ENCODE measurements at regions of chr5 and their contacts with region 1.

Region 1: DNA sequence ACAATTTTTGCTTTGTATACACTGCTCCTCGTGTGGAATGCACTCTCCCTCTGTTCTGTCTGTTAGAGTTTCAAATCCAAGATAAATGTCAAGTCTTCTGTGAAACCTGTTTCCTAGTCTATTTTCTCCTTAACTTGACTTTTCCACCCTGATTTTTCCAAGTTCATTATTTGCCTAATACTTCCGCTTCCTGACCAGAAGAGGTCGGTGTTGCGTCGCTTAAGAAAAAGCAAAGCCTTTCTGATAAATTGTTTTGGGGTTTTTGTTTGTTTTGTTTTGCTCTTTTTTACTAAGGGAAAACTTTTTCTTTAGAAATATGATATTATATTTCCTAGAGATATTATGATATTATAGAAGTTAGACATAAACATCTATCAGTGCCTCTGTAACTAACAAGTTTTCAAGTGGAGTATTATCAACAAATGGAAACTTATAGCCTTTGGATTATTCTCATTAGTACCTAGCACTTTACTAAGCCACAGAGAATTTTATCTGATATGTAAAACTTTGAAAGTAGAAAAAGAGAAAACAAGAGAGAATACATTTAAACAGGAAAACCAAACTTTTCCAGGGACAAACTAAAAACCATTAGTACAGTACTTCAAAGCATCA is 55.8 kb downstream of the PHAX start:
- DNase-seq: peak; percentile 31
- ATAC-seq: no peak
- H3K4me3 ChIP-seq: no peak overlapping the region
- H3K27ac ChIP-seq: no peak overlapping the region
- H3K4me1 ChIP-seq: no peaks in the 10 kb centered on the region
- H3K27me3 ChIP-seq: no peaks in the 10 kb centered on the region
- CTCF ChIP-seq: peak; percentile 83 to 87 (median 86)
- POLR2A ChIP-seq: no peak
- RAD21 ChIP-seq: peak; percentile 92

Region 2: GRCh38 chr5:126354012-126354857 is 302.3 kb before region 1 on chr5:
- CTCF ChIA-PET with region 1: no interaction called
- POLR2A ChIA-PET with region 1: no interaction called
- RAD21 ChIA-PET with region 1: no interaction called
- intact Hi-C with region 1: loop called (anchors 5 kb)
- DNase-seq: peak; percentile 64
- ATAC-seq: peak; percentile 85
- H3K4me3 ChIP-seq: peak overlapping the region; percentile 14 to 44
- H3K27ac ChIP-seq: peak overlapping the region; percentile 62
- H3K4me1 ChIP-seq: peaks cover 19 to 32% of the 10 kb centered on the region in 2 experiments; a peak in 3 of 4 replicates
- H3K27me3 ChIP-seq: no peaks in the 10 kb centered on the region
- CTCF ChIP-seq: peak; percentile 31 to 90 (median 71); a peak in 5 of 6 replicates
- POLR2A ChIP-seq: no peak
- RAD21 ChIP-seq: peak; percentile 94

Region 3: DNA sequence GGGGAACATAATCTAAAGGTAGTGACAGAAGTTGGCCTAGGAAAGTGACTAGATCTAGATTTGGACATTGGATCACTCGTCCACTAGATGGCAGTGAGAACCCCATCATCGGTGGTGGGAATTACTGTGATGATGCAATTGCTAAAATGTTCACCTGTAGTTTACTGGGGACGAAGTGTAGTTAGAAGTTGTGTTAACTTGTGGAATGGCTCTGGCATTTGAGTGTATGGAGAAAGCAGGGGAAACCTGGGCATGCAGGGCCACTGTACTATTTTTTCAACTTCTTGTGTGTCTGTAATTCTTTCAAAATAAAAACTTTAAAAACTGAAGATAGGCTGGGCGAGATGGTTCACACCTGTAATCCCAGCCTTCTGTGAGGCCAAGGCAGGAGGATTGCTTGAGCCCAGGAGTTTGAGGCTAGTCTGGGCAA is 19.7 kb after region 1 on chr5:
- CTCF ChIA-PET with region 1: no interaction called
- POLR2A ChIA-PET with region 1: no interaction called
- RAD21 ChIA-PET with region 1: no interaction called
- intact Hi-C with region 1: no loop called
- DNase-seq: peak; percentile 60
- ATAC-seq: peak; percentile 86
- H3K4me3 ChIP-seq: no peak overlapping the region
- H3K27ac ChIP-seq: no peak overlapping the region
- H3K4me1 ChIP-seq: no peaks in the 10 kb centered on the region
- H3K27me3 ChIP-seq: no peaks in the 10 kb centered on the region
- CTCF ChIP-seq: peak; percentile 74 to 83 (median 79); a peak in 5 of 6 replicates
- POLR2A ChIP-seq: no peak
- RAD21 ChIP-seq: peak; percentile 93

Region 4: GRCh38 chr5:126718246-126718868 is 61.9 kb after region 1 on chr5:
- CTCF ChIA-PET with region 1: no interaction called
- POLR2A ChIA-PET with region 1: no interaction called
- RAD21 ChIA-PET with region 1: no interaction called
- intact Hi-C with region 1: no loop called
- DNase-seq: no peak
- ATAC-seq: no peak
- H3K4me3 ChIP-seq: no peak overlapping the region
- H3K27ac ChIP-seq: no peak overlapping the region
- H3K4me1 ChIP-seq: no peaks in the 10 kb centered on the region
- H3K27me3 ChIP-seq: no peaks in the 10 kb centered on the region
- CTCF ChIP-seq: no peak
- POLR2A ChIP-seq: no peak
- RAD21 ChIP-seq: no peak

Region 5: DNA sequence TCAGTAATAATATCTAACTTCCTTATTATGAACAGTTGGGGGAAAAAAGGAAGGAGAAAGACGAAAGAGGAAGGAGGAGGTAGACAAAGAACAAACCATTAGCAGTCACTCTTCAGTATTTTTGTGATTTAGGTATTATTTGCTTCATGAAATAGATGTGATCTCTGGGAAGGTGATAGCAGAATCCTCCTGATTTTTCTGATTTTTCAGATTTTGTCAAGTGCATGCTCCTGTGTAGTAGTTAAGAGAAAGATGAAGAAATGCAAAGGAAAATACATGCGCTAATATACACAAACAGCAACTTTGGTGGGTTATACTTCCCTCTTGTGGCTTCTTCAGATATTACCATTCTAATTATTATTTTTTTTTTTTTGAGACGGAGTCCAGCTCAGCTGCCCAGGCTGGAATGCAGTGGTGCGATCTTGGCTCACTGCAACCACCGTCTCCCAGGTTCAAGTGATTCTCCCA is 152.1 kb after region 1 on chr5:
- CTCF ChIA-PET with region 1: interaction called, 5 read pairs
- POLR2A ChIA-PET with region 1: no interaction called
- RAD21 ChIA-PET with region 1: no interaction called
- intact Hi-C with region 1: loop called (anchors 1 kb)
- DNase-seq: no peak
- ATAC-seq: peak; percentile 79
- H3K4me3 ChIP-seq: no peak overlapping the region
- H3K27ac ChIP-seq: no peak overlapping the region
- H3K4me1 ChIP-seq: no peaks in the 10 kb centered on the region
- H3K27me3 ChIP-seq: no peaks in the 10 kb centered on the region
- CTCF ChIP-seq: peak; percentile 35 to 49 (median 44); a peak in 3 of 6 replicates
- POLR2A ChIP-seq: no peak
- RAD21 ChIP-seq: peak; percentile 54

Region 6: DNA sequence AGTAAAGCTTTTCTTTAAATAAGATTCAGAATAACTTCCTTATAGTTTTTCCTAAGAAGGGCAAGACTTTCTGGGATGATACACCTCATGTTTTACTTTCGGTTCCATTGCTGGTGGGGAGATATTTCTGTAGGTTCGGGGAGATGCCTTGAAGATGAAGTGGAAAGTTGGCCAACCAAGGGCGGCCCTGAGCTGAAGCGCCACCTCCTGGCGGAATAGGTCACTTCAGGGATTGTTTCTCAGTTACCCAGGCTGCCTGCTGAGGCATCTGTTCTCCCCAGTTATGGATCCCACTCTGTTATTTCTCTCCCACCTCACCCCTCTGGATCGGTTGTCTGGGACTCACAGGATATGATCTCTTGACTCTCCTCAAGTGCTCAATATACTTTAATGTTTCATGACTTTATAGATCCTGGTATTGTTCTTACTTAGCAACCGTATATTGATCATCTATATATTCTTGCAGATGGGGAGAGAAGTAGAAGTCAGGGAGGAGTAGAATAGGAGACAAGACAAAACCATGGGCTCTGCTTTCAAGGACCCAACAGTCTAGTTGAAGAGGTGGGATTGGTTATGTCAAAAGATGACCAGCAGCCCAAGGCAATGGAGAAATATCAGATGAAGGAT is 657.5 kb after region 1 on chr5:
- CTCF ChIA-PET with region 1: no interaction called
- POLR2A ChIA-PET with region 1: no interaction called
- RAD21 ChIA-PET with region 1: no interaction called
- intact Hi-C with region 1: loop called (anchors 1 kb)
- DNase-seq: peak; percentile 33
- ATAC-seq: peak; percentile 99
- H3K4me3 ChIP-seq: no peak overlapping the region
- H3K27ac ChIP-seq: no peak overlapping the region
- H3K4me1 ChIP-seq: no peaks in the 10 kb centered on the region
- H3K27me3 ChIP-seq: no peaks in the 10 kb centered on the region
- CTCF ChIP-seq: peak; percentile 65 to 85 (median 84)
- POLR2A ChIP-seq: no peak
- RAD21 ChIP-seq: peak; percentile 82

Region 7: DNA sequence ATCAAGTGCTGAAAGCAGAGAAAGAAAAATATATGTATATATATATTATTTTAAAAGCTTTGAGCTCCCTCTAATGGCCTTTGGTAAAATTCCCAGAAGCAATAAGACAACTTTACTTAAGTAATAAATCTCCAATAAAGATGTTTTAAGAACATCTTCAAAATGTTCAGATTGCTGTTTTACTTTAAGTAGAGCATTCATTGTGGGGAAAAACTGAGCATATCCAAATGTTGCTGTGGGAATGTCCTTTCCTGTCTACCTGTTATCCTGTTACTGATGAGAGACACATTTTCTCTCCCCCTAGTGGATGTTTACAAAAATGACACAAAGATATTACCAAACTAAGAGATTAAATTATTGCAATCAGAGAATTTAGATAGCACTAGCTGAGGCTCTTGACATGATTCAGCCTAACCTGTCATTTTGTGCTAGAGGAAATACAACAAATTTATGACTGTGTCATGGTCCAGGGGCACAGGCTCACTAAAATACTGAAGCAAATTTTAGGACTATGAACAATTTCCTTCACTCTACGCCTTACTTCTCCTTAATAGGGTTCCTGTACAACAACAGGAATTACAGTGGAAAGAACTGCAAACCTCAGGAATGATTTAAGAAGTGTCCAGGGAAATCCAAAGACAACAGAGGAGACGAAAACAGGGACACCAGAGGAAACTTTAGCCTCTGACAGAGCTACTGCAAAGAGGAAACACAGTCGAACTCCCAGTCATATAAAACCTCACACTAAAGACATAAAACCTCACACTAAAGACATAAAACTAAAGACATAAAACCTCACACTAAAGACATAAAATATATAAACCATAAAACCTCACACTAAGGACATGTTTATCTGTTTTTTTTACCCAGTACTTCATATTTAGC is 836.6 kb after region 1 on chr5:
- CTCF ChIA-PET with region 1: interaction called, 4 read pairs
- POLR2A ChIA-PET with region 1: interaction called, 3 read pairs
- RAD21 ChIA-PET with region 1: no interaction called
- intact Hi-C with region 1: loop called (anchors 2 kb)
- DNase-seq: peak; percentile 54
- ATAC-seq: peak; percentile 74
- H3K4me3 ChIP-seq: no peak overlapping the region
- H3K27ac ChIP-seq: no peak overlapping the region
- H3K4me1 ChIP-seq: no peaks in the 10 kb centered on the region
- H3K27me3 ChIP-seq: no peaks in the 10 kb centered on the region
- CTCF ChIP-seq: peak; percentile 60 to 98 (median 91)
- POLR2A ChIP-seq: no peak
- RAD21 ChIP-seq: no peak; the same call in none of the 2 replicates

Measured in HCT116 (cell line).